RWPE1 (cell line): ENCODE measurements at regions of chr11 and their contacts with region 1.

Region 1: GRCh38 chr11:13210424-13210823 is 67.2 kb upstream of the BMAL1 start:
- DNase-seq: peak; percentile 66
- H3K27ac ChIP-seq: no peak overlapping the region
- CTCF ChIP-seq: peak; percentile 70

Region 2: GRCh38 chr11:13152736-13153533 is 57.5 kb before region 1 on chr11:
- CTCF ChIA-PET with region 1: no interaction called
- POLR2A ChIA-PET with region 1: no interaction called
- DNase-seq: no peak
- H3K27ac ChIP-seq: no peak overlapping the region
- CTCF ChIP-seq: no peak; the same call in 1 of the 2 replicates

Region 3: DNA sequence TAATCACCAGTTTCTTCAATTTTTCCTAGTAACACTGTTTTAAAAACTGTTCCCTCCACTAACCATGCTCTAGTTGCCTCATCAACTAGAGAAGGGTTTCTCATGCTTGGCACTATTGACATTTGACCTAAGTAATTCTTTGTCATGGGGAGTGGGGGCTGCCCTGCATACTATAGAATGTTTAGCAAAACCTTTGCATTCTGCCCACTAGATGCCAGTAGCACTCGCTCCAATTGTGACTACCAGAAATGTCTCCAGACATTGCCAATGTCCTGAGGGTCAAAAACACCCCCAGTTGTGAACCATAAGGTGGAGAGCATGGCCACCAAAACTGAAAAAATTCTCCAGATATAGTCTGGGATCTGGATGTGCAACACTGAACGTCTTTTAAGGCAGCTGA is 39.6 kb after region 1 on chr11:
- CTCF ChIA-PET with region 1: no interaction called
- POLR2A ChIA-PET with region 1: no interaction called
- DNase-seq: peak; percentile 38
- H3K27ac ChIP-seq: no peak overlapping the region
- CTCF ChIP-seq: no peak

Region 4: DNA sequence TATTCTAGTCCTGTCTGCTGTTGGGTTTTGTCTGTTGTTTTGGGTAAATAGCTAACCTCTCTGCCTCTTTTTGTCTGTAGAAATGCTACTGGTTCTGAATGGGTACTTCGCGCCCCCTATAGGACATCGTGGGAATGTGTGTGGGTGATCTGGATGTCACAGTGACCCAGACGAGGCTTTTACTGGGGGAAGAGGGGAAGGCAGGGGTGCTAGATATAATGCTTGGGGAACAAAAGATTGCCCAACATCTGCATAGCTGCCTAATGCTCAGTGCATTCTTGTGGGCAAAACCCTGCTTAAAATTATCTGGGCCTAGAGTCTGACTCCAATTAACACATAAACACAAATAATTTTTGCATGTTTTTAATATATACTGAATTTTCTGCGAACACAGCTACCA is 124.9 kb after region 1 on chr11:
- CTCF ChIA-PET with region 1: interaction called, 19 read pairs
- POLR2A ChIA-PET with region 1: no interaction called
- DNase-seq: peak; percentile 55
- H3K27ac ChIP-seq: no peak overlapping the region
- CTCF ChIP-seq: peak; percentile 72

Region 5: DNA sequence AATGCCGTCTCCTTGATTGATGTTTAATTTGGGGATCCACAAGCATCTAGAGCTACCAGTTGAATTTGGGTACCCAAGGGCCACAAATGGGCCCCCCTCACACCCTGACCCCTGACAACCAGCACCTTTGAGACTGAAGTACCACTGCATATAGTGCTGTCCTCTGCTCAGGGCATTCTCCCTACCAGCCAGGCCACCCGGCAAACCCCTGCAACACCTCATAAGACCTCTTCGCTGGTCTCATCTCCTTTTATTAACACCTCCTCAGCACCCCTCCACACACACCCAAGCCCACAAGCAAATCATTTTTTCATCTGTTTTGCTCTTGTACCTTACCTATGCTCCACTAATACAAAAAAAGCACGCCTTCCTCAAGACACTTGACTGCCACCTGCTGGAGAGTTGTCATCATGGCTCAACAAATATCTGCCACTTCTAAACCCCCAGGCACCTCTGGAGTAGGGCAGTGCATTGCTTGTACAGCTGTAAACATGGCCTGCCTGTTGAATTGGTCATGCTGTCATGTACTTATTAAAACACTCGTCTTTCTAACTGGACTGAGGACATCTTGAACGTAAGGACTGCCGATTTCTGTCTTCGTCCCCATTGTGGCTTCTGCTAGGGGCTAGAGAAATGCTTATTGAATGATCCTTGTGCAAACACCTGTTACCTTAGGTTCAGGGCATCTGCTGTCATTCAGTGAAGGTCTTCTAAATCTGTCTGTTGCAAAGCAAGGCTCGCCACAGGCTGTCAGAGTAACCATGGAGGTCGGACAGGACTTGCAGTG is 133.7 kb after region 1 on chr11:
- CTCF ChIA-PET with region 1: interaction called, 19 read pairs
- POLR2A ChIA-PET with region 1: no interaction called
- DNase-seq: peak; percentile 66
- H3K27ac ChIP-seq: 0 out of 2 replicates have a peak overlapping the region, but pooled peaks have one; percentile 9
- CTCF ChIP-seq: peak; percentile 77

Region 6: DNA sequence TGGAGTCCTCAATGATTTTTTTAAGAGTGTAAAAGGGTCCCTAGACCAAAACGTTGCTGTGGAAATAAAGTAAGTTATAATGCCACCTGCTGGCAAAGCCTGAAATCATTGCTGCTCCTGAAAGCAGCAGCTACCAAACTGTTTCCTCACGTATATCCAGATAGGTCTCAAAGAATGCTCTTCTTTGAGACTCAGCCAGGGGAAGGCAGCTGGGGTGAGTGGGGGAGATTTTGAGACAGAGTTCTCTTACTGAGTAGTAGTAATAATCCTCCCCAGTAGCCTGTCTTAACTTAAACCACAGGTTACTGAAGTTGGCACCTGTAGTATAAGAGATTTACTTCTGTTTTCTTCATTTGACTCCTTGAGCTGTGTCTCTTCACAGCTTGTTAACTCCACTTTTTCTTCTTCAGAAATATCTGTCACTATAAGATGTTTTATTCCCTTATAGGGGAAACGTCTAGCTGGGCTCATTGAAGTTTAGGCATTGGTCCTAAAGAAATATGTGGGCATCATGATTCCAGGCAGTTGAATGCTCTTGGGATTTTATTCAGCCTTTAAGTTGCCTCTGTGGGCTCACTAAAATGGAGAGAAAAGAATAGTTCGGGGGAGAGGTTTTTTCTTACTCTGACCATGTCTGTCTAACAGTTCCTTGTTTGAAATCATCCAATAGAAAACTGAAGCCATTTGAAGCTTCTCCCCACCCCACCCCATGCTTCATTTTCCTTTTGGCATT is 174.7 kb after region 1 on chr11:
- CTCF ChIA-PET with region 1: interaction called, 11 read pairs
- POLR2A ChIA-PET with region 1: no interaction called
- DNase-seq: peak; percentile 42
- H3K27ac ChIP-seq: no peak overlapping the region
- CTCF ChIP-seq: peak; percentile 78